CD8-positive, alpha-beta memory T cell (primary cell): ENCODE measurements at regions of chr17 and their contacts with region 1.

Region 1: GRCh38 chr17:68291844-68292695 is 775 bp downstream of the ARSG start:
- DNase-seq: peak; percentile 92 to 98 (median 97)
- H3K4me3 ChIP-seq: peak overlapping the region; percentile 68
- H3K4me3 Mint-ChIP-seq: peak overlapping the region; percentile 84 to 100 (median 85)
- H3K27ac ChIP-seq: peak overlapping the region; percentile 94
- H3K27ac Mint-ChIP-seq: peak overlapping the region; percentile 84 to 100 (median 94)
- H3K4me1 ChIP-seq: peaks cover 61% of the 10 kb centered on the region
- H3K4me1 Mint-ChIP-seq: peaks cover 55 to 83% (median 69%) of the 10 kb centered on the region in 3 donors
- H3K27me3 ChIP-seq: no peaks in the 10 kb centered on the region
- H3K27me3 Mint-ChIP-seq: no peaks in the 10 kb centered on the region

Region 2: GRCh38 chr17:68228817-68229572 is 63.1 kb before region 1 on chr17:
- CTCF ChIA-PET with region 1: no interaction called
- POLR2A ChIA-PET with region 1: no interaction called
- DNase-seq: no peak
- H3K4me3 ChIP-seq: no peak overlapping the region
- H3K4me3 Mint-ChIP-seq: no peak overlapping the region
- H3K27ac ChIP-seq: no peak overlapping the region
- H3K27ac Mint-ChIP-seq: peak overlapping the region in 7 of 8 donors; percentile 48 to 94 (median 82)
- H3K4me1 ChIP-seq: peaks cover under 1% of the 10 kb centered on the region
- H3K4me1 Mint-ChIP-seq: peaks cover 17 to 66% (median 44%) of the 10 kb centered on the region in 3 donors
- H3K27me3 ChIP-seq: no peaks in the 10 kb centered on the region
- H3K27me3 Mint-ChIP-seq: no peaks in the 10 kb centered on the region

Region 3: DNA sequence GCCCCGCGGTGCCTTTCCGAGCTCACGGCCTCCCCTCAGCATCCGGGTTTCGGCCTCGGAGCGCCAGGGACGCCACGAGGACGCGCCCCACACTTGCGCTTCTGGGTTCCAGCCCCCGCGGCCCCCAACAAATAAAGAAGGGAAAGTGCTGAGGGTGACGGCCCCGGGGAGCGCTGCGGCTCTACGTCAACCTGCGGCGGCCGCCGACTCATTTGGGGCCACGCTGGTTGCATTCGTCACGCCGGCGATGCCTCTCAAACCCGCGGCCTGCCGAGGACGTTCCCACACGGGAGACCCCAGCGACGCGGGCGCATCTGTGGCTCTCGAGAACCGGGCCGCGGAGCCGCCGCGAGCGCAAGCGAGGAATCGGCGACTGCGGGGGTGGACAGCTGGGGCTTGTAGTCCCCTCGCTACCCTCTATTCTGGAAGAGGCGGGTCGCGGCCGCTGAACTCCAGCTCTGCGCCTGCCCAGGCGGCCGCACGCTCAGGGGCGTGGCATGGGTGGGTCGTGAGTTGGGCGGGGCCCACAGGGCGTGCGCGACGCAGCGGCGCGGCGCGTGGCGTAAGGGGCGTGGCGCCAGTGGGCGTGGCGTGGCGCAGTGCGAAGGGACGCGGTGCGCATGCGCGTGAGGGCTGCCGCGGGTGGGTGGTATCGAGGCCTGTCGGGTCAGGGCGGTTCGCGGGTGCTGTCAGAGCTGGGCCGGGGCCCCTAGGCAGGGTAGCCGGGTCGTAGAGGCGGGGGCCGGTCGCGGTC is 44.4 kb before region 1 on chr17 and contains the start of gene AMZ2:
- CTCF ChIA-PET with region 1: no interaction called
- POLR2A ChIA-PET with region 1: interaction called, 33 read pairs
- DNase-seq: peak; percentile 95 to 99 (median 98)
- H3K4me3 ChIP-seq: peak within 1 kb of the TSS; percentile 97
- H3K4me3 Mint-ChIP-seq: peak within 1 kb of the TSS; percentile 87 to 98 (median 96)
- H3K27ac ChIP-seq: peak within 1 kb of the TSS; percentile 96
- H3K27ac Mint-ChIP-seq: peak within 1 kb of the TSS; percentile 96 to 100 (median 98)
- H3K4me1 ChIP-seq: peaks cover 34% of the 10 kb centered on the region
- H3K4me1 Mint-ChIP-seq: peaks cover 35 to 63% (median 53%) of the 10 kb centered on the region in 3 donors
- H3K27me3 ChIP-seq: no peaks in the 10 kb centered on the region
- H3K27me3 Mint-ChIP-seq: peaks cover 0 to 8% of the 10 kb centered on the region in 2 donors
- total RNA-seq, gene AMZ2: 113 to 118 TPM

Region 4: GRCh38 chr17:68346448-68346847 is 54.4 kb after region 1 on chr17:
- CTCF ChIA-PET with region 1: interaction called, 6 read pairs
- POLR2A ChIA-PET with region 1: interaction called, 25 read pairs
- DNase-seq: peak; percentile 34 to 79 (median 62)
- H3K4me3 ChIP-seq: peak overlapping the region; percentile 28
- H3K4me3 Mint-ChIP-seq: peak overlapping the region; percentile 55 to 87 (median 82)
- H3K27ac ChIP-seq: peak overlapping the region; percentile 43
- H3K27ac Mint-ChIP-seq: peak overlapping the region; percentile 90 to 99 (median 94)
- H3K4me1 ChIP-seq: peaks cover 77% of the 10 kb centered on the region
- H3K4me1 Mint-ChIP-seq: peaks cover 74 to 84% (median 76%) of the 10 kb centered on the region in 3 donors
- H3K27me3 ChIP-seq: no peaks in the 10 kb centered on the region
- H3K27me3 Mint-ChIP-seq: peaks cover 0 to 1% of the 10 kb centered on the region in 2 donors

Region 5: GRCh38 chr17:68398691-68399637 is 106.9 kb after region 1 on chr17:
- CTCF ChIA-PET with region 1: interaction called, 10 read pairs
- POLR2A ChIA-PET with region 1: interaction called, 7 read pairs
- DNase-seq: no peak
- H3K4me3 ChIP-seq: no peak overlapping the region
- H3K4me3 Mint-ChIP-seq: peak overlapping the region in 5 of 7 donors; percentile 8 to 76 (median 27)
- H3K27ac ChIP-seq: no peak overlapping the region
- H3K27ac Mint-ChIP-seq: peak overlapping the region in 5 of 8 donors; percentile 26 to 89 (median 51)
- H3K4me1 ChIP-seq: peaks cover 32% of the 10 kb centered on the region
- H3K4me1 Mint-ChIP-seq: peaks cover 25 to 33% (median 29%) of the 10 kb centered on the region in 3 donors
- H3K27me3 ChIP-seq: no peaks in the 10 kb centered on the region
- H3K27me3 Mint-ChIP-seq: no peaks in the 10 kb centered on the region

Region 6: DNA sequence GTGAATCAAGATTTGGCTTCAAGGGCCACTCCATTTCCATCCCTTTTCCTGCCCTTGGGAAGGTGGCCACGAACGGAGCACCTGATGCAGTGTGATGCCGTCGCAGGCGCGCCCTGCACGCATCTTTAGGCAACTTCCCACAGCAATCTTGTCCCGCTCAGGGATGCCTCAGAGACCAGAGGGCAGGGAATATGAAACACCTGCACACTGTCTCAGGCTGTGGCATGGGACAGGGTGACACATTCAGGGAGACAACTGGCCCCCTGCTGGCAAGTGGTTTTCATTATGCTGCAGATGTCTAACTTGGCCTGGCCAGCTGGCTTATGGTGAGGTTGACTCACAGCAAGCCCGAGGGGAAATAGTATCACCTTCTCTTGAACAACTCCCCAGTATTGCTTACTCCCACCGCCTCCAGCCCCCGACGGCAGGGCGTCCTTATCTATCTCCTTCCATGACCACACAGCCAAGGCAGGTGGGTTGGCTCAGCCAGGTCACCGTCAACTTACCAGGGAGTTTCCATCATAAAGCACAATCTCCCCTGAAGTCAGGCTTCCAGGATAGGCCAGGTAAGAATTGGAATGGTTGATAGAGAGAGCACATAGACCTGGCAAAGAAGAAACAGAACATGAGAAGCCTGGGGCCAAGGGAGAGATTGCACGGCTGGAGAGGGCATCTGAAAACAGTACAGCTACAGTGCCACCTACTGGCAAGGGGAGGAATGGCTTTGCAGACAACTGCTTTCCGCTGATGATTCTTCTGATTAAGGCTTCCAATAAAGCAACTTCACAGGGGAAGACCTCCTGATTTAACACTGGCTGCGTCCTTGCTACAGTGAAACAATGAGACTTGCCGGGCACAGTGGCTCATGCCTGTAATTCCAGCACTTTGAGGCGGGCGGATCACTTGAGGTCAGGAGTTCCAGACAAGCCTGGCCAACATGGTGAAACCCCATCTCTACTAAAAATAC is 144.1 kb after region 1 on chr17:
- CTCF ChIA-PET with region 1: interaction called, 21 read pairs
- POLR2A ChIA-PET with region 1: interaction called, 28 read pairs
- DNase-seq: peak; percentile 71 to 87 (median 77)
- H3K4me3 ChIP-seq: no peak overlapping the region
- H3K4me3 Mint-ChIP-seq: peak overlapping the region; percentile 33 to 85 (median 68)
- H3K27ac ChIP-seq: no peak overlapping the region
- H3K27ac Mint-ChIP-seq: peak overlapping the region; percentile 81 to 98 (median 92)
- H3K4me1 ChIP-seq: peaks cover 35% of the 10 kb centered on the region
- H3K4me1 Mint-ChIP-seq: peaks cover 33 to 60% (median 51%) of the 10 kb centered on the region in 3 donors
- H3K27me3 ChIP-seq: no peaks in the 10 kb centered on the region
- H3K27me3 Mint-ChIP-seq: no peaks in the 10 kb centered on the region